Natural killer cell (primary cell): ENCODE measurements at regions of chr6 and their contacts with region 1.

Region 1: GRCh38 chr6:130282234-130282995 is 59.7 kb upstream of the SAMD3 start:
- DNase-seq: peak in 1 of 2 donors; percentile 62
- ATAC-seq: peak; percentile 70 to 87 (median 82)
- H3K4me3 ChIP-seq: no peak overlapping the region
- H3K4me3 Mint-ChIP-seq: no peak overlapping the region
- H3K27ac ChIP-seq: no peak overlapping the region
- H3K27ac Mint-ChIP-seq: peak overlapping the region in 1 of 2 donors; percentile 10
- H3K4me1 ChIP-seq: no peaks in the 10 kb centered on the region
- H3K4me1 Mint-ChIP-seq: peaks cover 9 to 10% of the 10 kb centered on the region in 2 donors
- H3K27me3 ChIP-seq: no peaks in the 10 kb centered on the region
- H3K27me3 Mint-ChIP-seq: no peaks in the 10 kb centered on the region
- CTCF ChIP-seq: peak; percentile 72

Region 2: GRCh38 chr6:130076512-130076911 is 205.9 kb before region 1 on chr6:
- intact Hi-C with region 1: loop called (anchors 1 kb)
- DNase-seq: peak in 1 of 2 donors; percentile 32
- ATAC-seq: peak in 2 of 3 donors; percentile 51 to 61
- H3K4me3 ChIP-seq: no peak overlapping the region
- H3K4me3 Mint-ChIP-seq: no peak overlapping the region
- H3K27ac ChIP-seq: no peak overlapping the region
- H3K27ac Mint-ChIP-seq: no peak overlapping the region
- H3K4me1 ChIP-seq: no peaks in the 10 kb centered on the region
- H3K4me1 Mint-ChIP-seq: peaks cover 18 to 23% of the 10 kb centered on the region in 2 donors
- H3K27me3 ChIP-seq: no peaks in the 10 kb centered on the region
- H3K27me3 Mint-ChIP-seq: no peaks in the 10 kb centered on the region
- CTCF ChIP-seq: peak; percentile 53

Region 3: GRCh38 chr6:130148181-130148580 is 134.2 kb before region 1 on chr6:
- intact Hi-C with region 1: loop called (anchors 1 kb)
- DNase-seq: peak in 1 of 2 donors; percentile 43
- ATAC-seq: peak; percentile 63 to 84 (median 73)
- H3K4me3 ChIP-seq: no peak overlapping the region
- H3K4me3 Mint-ChIP-seq: no peak overlapping the region
- H3K27ac ChIP-seq: no peak overlapping the region
- H3K27ac Mint-ChIP-seq: peak overlapping the region; percentile 73 to 87
- H3K4me1 ChIP-seq: no peaks in the 10 kb centered on the region
- H3K4me1 Mint-ChIP-seq: peaks cover 40 to 60% of the 10 kb centered on the region in 2 donors
- H3K27me3 ChIP-seq: no peaks in the 10 kb centered on the region
- H3K27me3 Mint-ChIP-seq: no peaks in the 10 kb centered on the region
- CTCF ChIP-seq: peak; percentile 41

Region 4: GRCh38 chr6:130547723-130548122 is 265.3 kb after region 1 on chr6:
- intact Hi-C with region 1: no loop called
- DNase-seq: no peak
- ATAC-seq: no peak
- H3K4me3 ChIP-seq: no peak overlapping the region
- H3K4me3 Mint-ChIP-seq: no peak overlapping the region
- H3K27ac ChIP-seq: no peak overlapping the region
- H3K27ac Mint-ChIP-seq: no peak overlapping the region
- H3K4me1 ChIP-seq: no peaks in the 10 kb centered on the region
- H3K4me1 Mint-ChIP-seq: no peaks in the 10 kb centered on the region
- H3K27me3 ChIP-seq: no peaks in the 10 kb centered on the region
- H3K27me3 Mint-ChIP-seq: no peaks in the 10 kb centered on the region
- CTCF ChIP-seq: no peak